ENCODE measurements at regions of chr16 and their contacts with region 1.

Region 1: DNA sequence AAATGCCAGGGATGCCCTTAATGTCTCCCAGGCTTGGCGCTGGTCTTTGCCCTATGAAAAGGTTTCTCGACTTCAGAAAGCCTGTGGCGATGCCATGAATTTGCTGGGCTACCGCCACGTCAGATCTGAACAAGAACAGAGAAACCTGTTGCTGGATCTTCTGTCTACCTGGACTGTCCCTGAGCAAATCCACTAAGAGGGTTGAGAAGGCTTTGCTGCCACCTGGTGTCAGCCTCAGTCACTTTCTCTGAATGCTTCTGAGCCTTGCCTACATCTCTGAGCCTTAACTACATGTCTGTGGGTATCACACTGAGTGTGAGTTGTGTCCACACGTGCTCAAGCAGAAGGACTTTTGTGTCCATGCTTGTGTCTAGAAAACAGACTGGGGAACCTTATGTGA is 11.4 kb downstream of the CHST4 start:
- DNase-seq: no peak
- ATAC-seq: peak; percentile 65
- H3K4me3 Mint-ChIP-seq: no peak overlapping the region
- H3K27ac Mint-ChIP-seq: no peak overlapping the region
- H3K4me1 Mint-ChIP-seq: peaks cover 16% of the 10 kb centered on the region
- H3K27me3 Mint-ChIP-seq: peaks cover 8% of the 10 kb centered on the region
- CTCF ChIP-seq: no peak

Region 2: GRCh38 chr16:71205482-71206131 is 332.0 kb before region 1 on chr16:
- CTCF ChIA-PET with region 1: no interaction called
- POLR2A ChIA-PET with region 1: no interaction called
- intact Hi-C with region 1: no loop called
- DNase-seq: no peak
- ATAC-seq: no peak
- H3K4me3 Mint-ChIP-seq: no peak overlapping the region
- H3K27ac Mint-ChIP-seq: no peak overlapping the region
- H3K4me1 Mint-ChIP-seq: no peaks in the 10 kb centered on the region
- H3K27me3 Mint-ChIP-seq: peaks cover 28% of the 10 kb centered on the region
- CTCF ChIP-seq: no peak

Region 3: GRCh38 chr16:71412270-71413160 is 125.1 kb before region 1 on chr16:
- CTCF ChIA-PET with region 1: interaction called, 11 read pairs
- POLR2A ChIA-PET with region 1: no interaction called
- intact Hi-C with region 1: loop called (anchors 1 kb)
- DNase-seq: peak; percentile 36
- ATAC-seq: peak; percentile 57
- H3K4me3 Mint-ChIP-seq: no peak overlapping the region
- H3K27ac Mint-ChIP-seq: no peak overlapping the region
- H3K4me1 Mint-ChIP-seq: peaks cover 9% of the 10 kb centered on the region
- H3K27me3 Mint-ChIP-seq: peaks cover 32% of the 10 kb centered on the region
- CTCF ChIP-seq: peak; percentile 38

Region 4: GRCh38 chr16:71499775-71500364 is 37.8 kb before region 1 on chr16:
- CTCF ChIA-PET with region 1: interaction called, 11 read pairs
- POLR2A ChIA-PET with region 1: no interaction called
- intact Hi-C with region 1: no loop called
- DNase-seq: no peak
- ATAC-seq: peak; percentile 81
- H3K4me3 Mint-ChIP-seq: no peak overlapping the region
- H3K27ac Mint-ChIP-seq: no peak overlapping the region
- H3K4me1 Mint-ChIP-seq: no peaks in the 10 kb centered on the region
- H3K27me3 Mint-ChIP-seq: peaks cover 24% of the 10 kb centered on the region
- CTCF ChIP-seq: no peak

Region 5: GRCh38 chr16:71573387-71574094 is 35.9 kb after region 1 on chr16:
- CTCF ChIA-PET with region 1: no interaction called
- POLR2A ChIA-PET with region 1: no interaction called
- intact Hi-C with region 1: no loop called
- DNase-seq: no peak
- ATAC-seq: no peak
- H3K4me3 Mint-ChIP-seq: no peak overlapping the region
- H3K27ac Mint-ChIP-seq: no peak overlapping the region
- H3K4me1 Mint-ChIP-seq: peaks cover 18% of the 10 kb centered on the region
- H3K27me3 Mint-ChIP-seq: no peaks in the 10 kb centered on the region
- CTCF ChIP-seq: no peak

Region 6: GRCh38 chr16:71584543-71585317 is 47.1 kb after region 1 on chr16:
- CTCF ChIA-PET with region 1: no interaction called
- POLR2A ChIA-PET with region 1: no interaction called
- intact Hi-C with region 1: no loop called
- DNase-seq: no peak
- ATAC-seq: no peak
- H3K4me3 Mint-ChIP-seq: no peak overlapping the region
- H3K27ac Mint-ChIP-seq: no peak overlapping the region
- H3K4me1 Mint-ChIP-seq: peaks cover 11% of the 10 kb centered on the region
- H3K27me3 Mint-ChIP-seq: peaks cover 2% of the 10 kb centered on the region
- CTCF ChIP-seq: no peak

Region 7: DNA sequence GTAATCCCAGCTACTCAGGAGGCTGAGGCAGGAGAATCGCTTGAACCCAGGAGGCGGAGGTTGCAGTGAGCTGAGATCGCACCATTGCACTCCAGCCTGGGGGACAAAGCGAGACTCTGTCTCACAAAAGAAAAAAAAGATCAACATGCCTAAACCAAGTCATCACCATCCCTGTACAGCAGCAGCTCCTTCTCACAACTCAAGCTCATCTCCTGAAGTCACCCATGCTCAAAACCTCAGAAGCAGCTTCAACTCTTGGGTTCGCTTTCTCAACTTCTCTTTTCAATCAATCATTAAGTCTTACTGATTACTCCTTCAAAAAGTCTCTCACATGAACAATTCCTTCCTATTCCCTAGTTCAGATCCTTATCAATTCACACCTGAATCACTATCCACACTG is 155.5 kb after region 1 on chr16:
- CTCF ChIA-PET with region 1: no interaction called
- POLR2A ChIA-PET with region 1: interaction called, 11 read pairs
- intact Hi-C with region 1: no loop called
- DNase-seq: no peak
- ATAC-seq: peak; percentile 62
- H3K4me3 Mint-ChIP-seq: peak overlapping the region; percentile 6
- H3K27ac Mint-ChIP-seq: peak overlapping the region; percentile 50
- H3K4me1 Mint-ChIP-seq: peaks cover 23% of the 10 kb centered on the region
- H3K27me3 Mint-ChIP-seq: no peaks in the 10 kb centered on the region
- CTCF ChIP-seq: no peak

Measured in activated B cell treated with CpG ODN at 0.5 μM for 24 hours (primary cell).